CD4-positive, alpha-beta memory T cell (primary cell): ENCODE measurements at regions of chr12 and their contacts with region 1.

Region 1: DNA sequence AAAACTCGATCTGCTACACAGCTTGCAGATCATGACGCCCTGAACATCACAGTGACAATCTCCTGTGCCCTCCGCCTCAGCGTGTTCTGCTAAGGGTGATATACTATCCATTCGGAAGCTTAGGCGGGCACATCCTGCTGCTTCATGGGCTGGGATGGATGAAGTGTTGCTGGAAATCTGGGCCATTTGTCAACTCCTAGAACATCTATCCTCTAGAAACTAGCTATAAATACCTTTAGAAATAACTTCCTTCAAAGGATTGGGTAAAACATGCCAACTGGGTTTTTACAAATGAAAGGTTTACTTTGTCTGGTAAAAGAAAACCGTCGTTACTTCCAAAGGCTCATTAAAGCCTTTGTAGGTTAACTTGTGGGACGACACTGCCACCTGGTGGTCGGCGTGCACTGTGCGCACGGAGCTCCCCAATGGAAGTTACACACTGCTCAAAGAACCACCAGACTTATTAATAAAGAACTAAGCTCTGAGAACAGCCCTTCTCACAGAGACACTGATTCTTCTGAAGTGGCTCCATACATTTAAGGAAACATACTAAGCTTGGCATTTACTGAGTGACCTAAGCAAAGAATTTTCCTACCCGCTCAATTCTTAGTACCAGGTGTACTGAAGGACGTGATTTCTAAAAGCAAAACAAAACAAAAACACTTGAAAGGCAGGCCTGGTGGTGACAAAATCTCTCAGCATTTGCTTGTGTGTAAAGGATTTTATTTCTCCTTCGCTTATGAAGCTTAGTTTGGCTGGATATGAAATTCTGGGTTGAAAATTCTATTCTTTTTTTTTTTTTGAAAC is 21.6 kb upstream of the CACNA2D4 start:
- DNase-seq: peak; percentile 81 to 87 (median 83)
- H3K4me3 ChIP-seq: no peak overlapping the region
- H3K4me3 Mint-ChIP-seq: no peak overlapping the region
- H3K27ac ChIP-seq: no peak overlapping the region
- H3K27ac Mint-ChIP-seq: peak overlapping the region in 4 of 7 donors; percentile 37 to 68 (median 52)
- H3K4me1 ChIP-seq: peaks cover 5% of the 10 kb centered on the region
- H3K4me1 Mint-ChIP-seq: peaks cover 4 to 6% (median 5%) of the 10 kb centered on the region in 4 donors
- H3K27me3 ChIP-seq: no peaks in the 10 kb centered on the region
- H3K27me3 Mint-ChIP-seq: no peaks in the 10 kb centered on the region

Region 2: GRCh38 chr12:1650260-1650977 is 289.6 kb before region 1 on chr12:
- CTCF ChIA-PET with region 1: interaction called, 118 read pairs
- POLR2A ChIA-PET with region 1: interaction called, 7 read pairs
- intact Hi-C with region 1: loop called (anchors 1 kb)
- DNase-seq: no peak
- H3K4me3 ChIP-seq: no peak overlapping the region
- H3K4me3 Mint-ChIP-seq: no peak overlapping the region
- H3K27ac ChIP-seq: no peak overlapping the region
- H3K27ac Mint-ChIP-seq: peak overlapping the region in 1 of 7 donors; percentile 53
- H3K4me1 ChIP-seq: no peaks in the 10 kb centered on the region
- H3K4me1 Mint-ChIP-seq: peaks cover 0 to 4% (median 3%) of the 10 kb centered on the region in 4 donors
- H3K27me3 ChIP-seq: no peaks in the 10 kb centered on the region
- H3K27me3 Mint-ChIP-seq: peaks cover 6 to 15% of the 10 kb centered on the region in 2 donors

Region 3: GRCh38 chr12:1795785-1796514 is 144.1 kb before region 1 on chr12:
- CTCF ChIA-PET with region 1: interaction called, 235 read pairs
- POLR2A ChIA-PET with region 1: interaction called, 59 read pairs
- intact Hi-C with region 1: loop called (anchors 1 kb)
- DNase-seq: peak; percentile 93 to 95 (median 94)
- H3K4me3 ChIP-seq: peak overlapping the region; percentile 38 to 96
- H3K4me3 Mint-ChIP-seq: peak overlapping the region; percentile 91 to 96 (median 92)
- H3K27ac ChIP-seq: peak overlapping the region; percentile 82
- H3K27ac Mint-ChIP-seq: peak overlapping the region; percentile 89 to 98 (median 92)
- H3K4me1 ChIP-seq: peaks cover 15% of the 10 kb centered on the region
- H3K4me1 Mint-ChIP-seq: peaks cover 15 to 32% (median 22%) of the 10 kb centered on the region in 4 donors
- H3K27me3 ChIP-seq: no peaks in the 10 kb centered on the region
- H3K27me3 Mint-ChIP-seq: no peaks in the 10 kb centered on the region

Region 4: GRCh38 chr12:1916371-1917171 is 23.4 kb before region 1 on chr12:
- CTCF ChIA-PET with region 1: interaction called, 46 read pairs
- POLR2A ChIA-PET with region 1: interaction called, 4 read pairs
- intact Hi-C with region 1: no loop called
- DNase-seq: no peak
- H3K4me3 ChIP-seq: no peak overlapping the region
- H3K4me3 Mint-ChIP-seq: peak overlapping the region in 4 of 8 donors; percentile 23 to 69 (median 54)
- H3K27ac ChIP-seq: no peak overlapping the region
- H3K27ac Mint-ChIP-seq: peak overlapping the region in 5 of 7 donors; percentile 15 to 92 (median 74)
- H3K4me1 ChIP-seq: peaks cover 24% of the 10 kb centered on the region
- H3K4me1 Mint-ChIP-seq: peaks cover 15 to 21% (median 17%) of the 10 kb centered on the region in 4 donors
- H3K27me3 ChIP-seq: no peaks in the 10 kb centered on the region
- H3K27me3 Mint-ChIP-seq: peaks cover 0 to 4% of the 10 kb centered on the region in 2 donors

Region 5: DNA sequence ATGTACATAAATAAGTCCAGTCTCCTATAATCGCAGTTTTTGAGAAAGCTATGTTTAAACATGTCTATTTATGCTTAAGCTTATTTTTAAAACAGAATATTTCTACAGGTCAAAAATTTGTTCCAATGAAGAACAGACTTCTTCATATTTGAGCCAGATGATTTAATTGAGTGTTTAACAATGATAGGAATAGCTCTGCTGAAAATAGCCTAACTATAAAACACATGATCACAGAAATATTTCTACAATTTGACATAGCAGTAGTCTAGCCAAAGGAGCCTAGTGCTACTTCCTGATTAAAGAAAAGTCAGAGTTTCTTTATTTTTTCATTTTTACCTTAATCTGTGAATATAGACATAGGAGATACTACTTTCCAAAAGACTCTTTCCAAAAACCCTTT is 34.8 kb after region 1 on chr12:
- CTCF ChIA-PET with region 1: interaction called, 10 read pairs
- POLR2A ChIA-PET with region 1: no interaction called
- intact Hi-C with region 1: no loop called
- DNase-seq: no peak
- H3K4me3 ChIP-seq: no peak overlapping the region
- H3K4me3 Mint-ChIP-seq: no peak overlapping the region
- H3K27ac ChIP-seq: no peak overlapping the region
- H3K27ac Mint-ChIP-seq: no peak overlapping the region
- H3K4me1 ChIP-seq: no peaks in the 10 kb centered on the region
- H3K4me1 Mint-ChIP-seq: peaks cover 0 to 14% (median 9%) of the 10 kb centered on the region in 4 donors
- H3K27me3 ChIP-seq: no peaks in the 10 kb centered on the region
- H3K27me3 Mint-ChIP-seq: no peaks in the 10 kb centered on the region